OCI-LY7 (cell line): ENCODE measurements at regions of chr7 and their contacts with region 1.

Region 1: DNA sequence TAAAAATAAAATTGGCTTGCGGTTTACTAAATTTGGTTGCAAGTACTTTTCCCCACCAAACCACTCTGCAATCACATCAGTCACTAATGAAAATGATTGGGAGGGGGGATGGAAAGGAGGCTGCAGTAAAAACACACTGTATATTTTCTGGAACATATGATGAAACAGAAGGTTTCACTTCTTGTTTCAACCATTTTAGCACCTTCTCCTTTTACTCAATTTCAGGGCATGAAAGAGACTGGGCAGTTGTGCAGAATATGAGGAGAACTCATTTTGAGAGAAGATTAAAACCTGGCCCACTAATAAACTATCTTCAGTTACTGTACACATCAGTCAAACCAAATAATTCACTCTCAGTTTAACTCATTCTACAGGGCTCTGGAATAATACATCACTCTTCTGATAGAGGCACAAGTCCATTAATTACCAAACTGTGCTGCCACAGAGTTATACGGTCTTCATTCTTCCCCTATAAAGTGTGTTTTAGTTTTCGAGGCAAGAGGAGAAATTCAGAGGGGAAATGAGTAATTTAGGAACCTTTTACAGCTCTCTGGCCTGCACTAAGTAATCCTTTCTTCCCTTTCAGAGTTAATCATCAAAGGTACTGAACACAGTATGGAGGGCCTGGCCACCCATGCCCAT is 25.5 kb downstream of the JAZF1 start:
- DNase-seq: peak; percentile 84
- H3K4me3 ChIP-seq: peak overlapping the region; percentile 55
- H3K27ac ChIP-seq: peak overlapping the region; percentile 97
- H3K4me1 ChIP-seq: peaks cover 99% of the 10 kb centered on the region
- CTCF ChIP-seq: no peak

Region 2: GRCh38 chr7:28165961-28166955 is 11.1 kb after region 1 on chr7:
- CTCF ChIA-PET with region 1: interaction called, 3 read pairs
- POLR2A ChIA-PET with region 1: interaction called, 23 read pairs
- intact Hi-C with region 1: loop called (anchors 1 kb)
- DNase-seq: no peak
- H3K4me3 ChIP-seq: peak overlapping the region; percentile 49
- H3K27ac ChIP-seq: peak overlapping the region; percentile 76
- H3K4me1 ChIP-seq: peaks cover 99% of the 10 kb centered on the region
- CTCF ChIP-seq: no peak

Region 3: GRCh38 chr7:28228396-28228795 is 73.3 kb after region 1 on chr7:
- CTCF ChIA-PET with region 1: no interaction called
- POLR2A ChIA-PET with region 1: no interaction called
- intact Hi-C with region 1: no loop called
- DNase-seq: no peak
- H3K4me3 ChIP-seq: no peak overlapping the region
- H3K27ac ChIP-seq: no peak overlapping the region
- H3K4me1 ChIP-seq: no peaks in the 10 kb centered on the region
- CTCF ChIP-seq: no peak

Region 4: GRCh38 chr7:28272461-28272877 is 117.3 kb after region 1 on chr7:
- CTCF ChIA-PET with region 1: no interaction called
- POLR2A ChIA-PET with region 1: no interaction called
- intact Hi-C with region 1: no loop called
- DNase-seq: peak; percentile 47
- H3K4me3 ChIP-seq: no peak overlapping the region
- H3K27ac ChIP-seq: no peak overlapping the region
- H3K4me1 ChIP-seq: peaks cover 10% of the 10 kb centered on the region
- CTCF ChIP-seq: peak; percentile 83